ENCODE measurements at regions of chr16 and their contacts with region 1.

Region 1: GRCh38 chr16:66483689-66484481 is 56.8 kb downstream of the BEAN1 start:
- DNase-seq: peak; percentile 80
- H3K4me3 ChIP-seq: no peak overlapping the region
- H3K27ac ChIP-seq: no peak overlapping the region
- H3K4me1 ChIP-seq: peaks cover 32% of the 10 kb centered on the region
- H3K27me3 ChIP-seq: no peaks in the 10 kb centered on the region
- CTCF ChIP-seq: peak; percentile 87 to 90 (median 88)
- POLR2A ChIP-seq: no peak

Region 2: DNA sequence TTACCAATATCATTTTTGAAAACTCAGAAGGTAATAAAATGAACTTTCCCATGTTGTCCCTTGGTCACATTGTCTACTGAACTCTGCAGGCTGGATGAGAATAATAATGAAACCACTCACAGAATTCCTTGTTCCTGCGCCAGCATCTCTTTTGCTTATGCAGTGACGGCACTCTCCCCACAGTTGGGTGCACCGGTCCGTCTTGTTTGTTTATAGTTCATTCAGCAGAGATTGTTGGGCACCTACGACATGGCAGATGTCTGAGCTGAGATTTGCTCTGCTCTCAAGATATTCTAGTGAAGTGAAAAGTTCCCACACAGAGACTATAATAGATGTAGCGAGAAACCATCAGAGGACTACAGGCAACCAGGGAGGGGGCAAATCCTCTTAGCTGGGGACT is 986.3 kb before region 1 on chr16:
- intact Hi-C with region 1: no loop called
- DNase-seq: no peak
- H3K4me3 ChIP-seq: no peak overlapping the region
- H3K27ac ChIP-seq: no peak overlapping the region
- H3K4me1 ChIP-seq: no peaks in the 10 kb centered on the region
- H3K27me3 ChIP-seq: no peaks in the 10 kb centered on the region
- CTCF ChIP-seq: no peak
- POLR2A ChIP-seq: no peak

Region 3: GRCh38 chr16:66364117-66364967 is 119.5 kb before region 1 on chr16:
- intact Hi-C with region 1: loop called (anchors 10 kb)
- DNase-seq: peak; percentile 79
- H3K4me3 ChIP-seq: no peak overlapping the region
- H3K27ac ChIP-seq: peak overlapping the region in 1 of 2 donors; percentile 39
- H3K4me1 ChIP-seq: peaks cover 20% of the 10 kb centered on the region
- H3K27me3 ChIP-seq: no peaks in the 10 kb centered on the region
- CTCF ChIP-seq: no peak
- POLR2A ChIP-seq: no peak

Region 4: GRCh38 chr16:66406534-66407221 is 77.2 kb before region 1 on chr16:
- intact Hi-C with region 1: loop called (anchors 10 kb)
- DNase-seq: peak; percentile 95
- H3K4me3 ChIP-seq: peak overlapping the region; percentile 35 to 56
- H3K27ac ChIP-seq: no peak overlapping the region
- H3K4me1 ChIP-seq: peaks cover 5% of the 10 kb centered on the region
- H3K27me3 ChIP-seq: no peaks in the 10 kb centered on the region
- CTCF ChIP-seq: peak; percentile 82 to 92 (median 82)
- POLR2A ChIP-seq: no peak

Region 5: DNA sequence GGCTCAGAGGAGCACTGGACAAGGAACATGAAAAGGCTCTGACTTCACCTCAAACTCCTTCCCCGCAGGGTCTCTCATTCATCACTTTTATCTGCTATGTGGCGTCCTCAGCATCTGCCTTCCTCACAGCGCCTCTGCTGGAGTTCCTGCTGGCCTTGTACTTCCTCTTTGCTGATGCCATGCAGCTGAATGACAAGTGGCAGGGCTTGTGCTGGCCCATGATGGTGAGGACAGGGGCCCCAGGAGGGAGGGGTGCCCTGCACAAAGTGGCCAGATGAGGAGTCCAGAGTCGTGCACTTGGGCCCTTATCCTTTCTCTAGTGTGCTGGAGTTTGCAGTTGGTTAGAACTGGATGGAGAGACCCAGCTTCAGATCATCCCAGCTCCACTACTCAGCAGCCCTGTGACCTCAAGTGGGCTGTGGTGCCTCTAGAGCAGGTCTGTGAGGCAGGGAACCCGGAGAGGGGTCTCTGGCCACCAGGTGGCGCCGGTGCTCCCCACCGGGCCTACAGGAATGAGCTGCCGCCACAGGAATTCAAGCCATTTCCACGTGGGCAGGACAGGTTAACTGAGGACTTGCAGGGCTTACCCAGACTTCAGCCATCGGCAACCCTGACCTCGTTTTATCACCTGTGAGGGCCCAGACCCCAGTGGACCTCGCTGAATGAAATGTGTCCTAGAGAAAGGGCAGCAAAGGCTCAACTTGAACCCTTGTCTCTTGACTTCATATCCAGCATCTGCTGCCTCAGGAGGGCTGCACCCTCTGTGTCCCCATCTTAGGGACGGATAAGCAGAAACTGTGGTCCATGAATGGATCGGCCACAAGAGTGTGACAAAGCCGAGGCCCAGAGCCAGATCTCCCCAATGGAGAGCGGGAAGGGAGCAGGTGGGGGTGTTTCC is 124.6 kb after region 1 on chr16:
- intact Hi-C with region 1: loop called (anchors 10 kb)
- DNase-seq: peak; percentile 94
- H3K4me3 ChIP-seq: no peak overlapping the region
- H3K27ac ChIP-seq: peak overlapping the region; percentile 29 to 60
- H3K4me1 ChIP-seq: peaks cover 25% of the 10 kb centered on the region
- H3K27me3 ChIP-seq: no peaks in the 10 kb centered on the region
- CTCF ChIP-seq: peak; percentile 75 to 92 (median 84)
- POLR2A ChIP-seq: no peak

Measured in testis (tissue), 5 donors.